ENCODE measurements at regions of chr1 and their contacts with region 1.

Region 1: GRCh38 chr1:201183209-201183608 is 7.4 kb upstream of the IGFN1 start:
- DNase-seq: peak; percentile 22
- ATAC-seq: no peak
- H3K4me3 ChIP-seq: no peak overlapping the region
- H3K27ac ChIP-seq: no peak overlapping the region
- H3K4me1 ChIP-seq: peaks cover 5% of the 10 kb centered on the region
- H3K27me3 ChIP-seq: no peaks in the 10 kb centered on the region
- CTCF ChIP-seq: no peak

Region 2: DNA sequence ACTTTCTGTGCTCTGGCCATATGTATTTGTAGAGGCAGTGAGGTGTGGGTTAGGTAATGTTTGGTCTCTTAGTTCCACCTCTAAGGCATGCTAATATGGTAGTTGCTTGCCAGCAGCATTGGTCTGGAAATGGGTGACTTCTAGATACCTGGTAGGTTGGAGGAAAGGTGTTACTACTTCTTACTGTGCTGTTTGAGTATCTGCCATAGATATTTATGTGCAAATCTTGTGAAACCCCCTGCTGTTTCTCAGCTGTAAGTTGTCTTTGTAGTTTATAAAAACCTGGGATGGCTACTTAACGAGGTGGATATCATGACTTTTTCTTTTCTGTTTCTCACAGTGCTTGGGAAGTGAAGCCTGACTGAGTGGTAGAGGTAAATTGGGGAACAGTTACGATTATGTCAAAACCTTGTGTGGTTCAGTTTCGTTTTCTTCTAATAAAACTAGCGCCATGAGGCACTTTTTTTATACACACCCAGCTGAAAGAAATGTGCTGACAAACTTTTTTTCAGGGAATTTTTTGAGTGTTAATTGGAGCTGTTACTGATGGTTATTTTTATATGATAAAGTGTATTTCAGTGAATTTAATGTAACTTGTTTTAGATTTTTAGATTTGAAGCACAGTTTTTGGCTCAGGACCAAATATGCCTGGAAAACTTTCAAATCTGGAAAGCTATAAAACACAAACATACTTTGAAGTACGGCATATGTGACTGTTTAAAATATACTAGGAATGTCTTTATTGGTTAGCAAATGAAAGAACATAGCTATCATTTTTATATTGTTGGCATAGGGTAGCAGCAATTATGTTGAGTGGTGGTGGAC is 402.5 kb before region 1 on chr1:
- intact Hi-C with region 1: no loop called
- DNase-seq: no peak
- ATAC-seq: peak; percentile 48
- H3K4me3 ChIP-seq: peak overlapping the region; percentile 31
- H3K27ac ChIP-seq: peak overlapping the region; percentile 55
- H3K4me1 ChIP-seq: peaks cover 4% of the 10 kb centered on the region
- H3K27me3 ChIP-seq: no peaks in the 10 kb centered on the region
- CTCF ChIP-seq: no peak

Region 3: GRCh38 chr1:201153474-201154388 is 29.5 kb before region 1 on chr1:
- intact Hi-C with region 1: loop called (anchors 2 kb)
- DNase-seq: no peak
- ATAC-seq: peak; percentile 82
- H3K4me3 ChIP-seq: peak overlapping the region; percentile 82
- H3K27ac ChIP-seq: peak overlapping the region; percentile 86
- H3K4me1 ChIP-seq: peaks cover 13% of the 10 kb centered on the region
- H3K27me3 ChIP-seq: no peaks in the 10 kb centered on the region
- CTCF ChIP-seq: no peak